Sigmoid colon (tissue), 7 donors: ENCODE measurements at regions of chr2 and their contacts with region 1.

Region 1: DNA sequence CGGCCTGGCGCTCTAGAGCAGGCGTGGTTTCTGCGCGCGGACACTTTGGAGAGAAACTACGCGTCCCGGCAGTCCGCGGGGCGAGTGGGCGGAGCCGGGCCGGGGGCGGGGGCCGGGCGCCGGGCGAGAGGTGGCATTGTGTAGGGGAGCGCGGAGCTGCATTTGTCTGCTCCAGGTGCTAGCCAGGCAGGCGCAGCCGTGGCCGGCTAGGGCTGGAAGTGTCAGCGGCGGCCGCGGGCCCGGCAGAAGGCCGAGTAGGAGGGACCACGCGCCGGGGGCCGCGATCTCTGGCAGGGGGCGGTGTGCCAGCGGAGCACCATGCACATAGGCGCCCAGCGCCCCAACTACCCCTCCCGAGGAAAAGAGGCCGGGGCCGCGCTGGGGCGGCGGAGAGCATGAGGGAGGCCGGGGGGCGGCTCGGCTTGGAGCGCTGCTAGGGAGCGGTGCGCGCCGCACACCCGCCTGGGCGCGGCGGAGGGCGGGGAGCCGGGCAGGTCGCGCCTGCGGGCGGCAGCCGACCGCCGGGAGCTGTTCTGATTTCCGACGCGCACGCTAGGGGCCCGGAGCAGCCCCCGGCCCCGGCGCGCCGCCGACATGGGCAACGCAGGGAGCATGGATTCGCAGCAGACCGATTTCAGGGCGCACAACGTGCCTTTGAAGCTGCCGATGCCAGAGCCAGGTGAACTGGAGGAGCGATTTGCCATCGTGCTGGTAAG is at the start of gene FMNL2:
- DNase-seq: peak; percentile 91
- H3K4me3 ChIP-seq: peak within 1 kb of the TSS; percentile 74 to 98 (median 90)
- H3K27ac ChIP-seq: peak within 1 kb of the TSS; percentile 83 to 88 (median 86)
- H3K4me1 ChIP-seq: peaks cover 0 to 38% (median 24%) of the 10 kb centered on the region in 4 donors
- H3K27me3 ChIP-seq: no peaks in the 10 kb centered on the region
- CTCF ChIP-seq: no peak
- EP300 ChIP-seq: no peak
- POLR2A ChIP-seq: peak in 1 of 2 donors; percentile 32
- total RNA-seq, gene FMNL2: 17.8 to 30.5 (median 24.7) TPM

Region 2: GRCh38 chr2:152189622-152190495 is 145.3 kb before region 1 on chr2:
- intact Hi-C with region 1: loop called (anchors 5 kb)
- DNase-seq: no peak
- H3K4me3 ChIP-seq: no peak overlapping the region
- H3K27ac ChIP-seq: no peak overlapping the region
- H3K4me1 ChIP-seq: no peaks in the 10 kb centered on the region
- H3K27me3 ChIP-seq: no peaks in the 10 kb centered on the region
- CTCF ChIP-seq: peak; percentile 61 to 85 (median 80)
- EP300 ChIP-seq: no peak
- POLR2A ChIP-seq: no peak

Region 3: GRCh38 chr2:152453129-152453911 is 118.2 kb after region 1 on chr2:
- intact Hi-C with region 1: no loop called
- DNase-seq: no peak
- H3K4me3 ChIP-seq: no peak overlapping the region
- H3K27ac ChIP-seq: no peak overlapping the region
- H3K4me1 ChIP-seq: peaks cover 0 to 6% (median 0%) of the 10 kb centered on the region in 4 donors
- H3K27me3 ChIP-seq: no peaks in the 10 kb centered on the region
- CTCF ChIP-seq: no peak
- EP300 ChIP-seq: no peak
- POLR2A ChIP-seq: no peak

Region 4: DNA sequence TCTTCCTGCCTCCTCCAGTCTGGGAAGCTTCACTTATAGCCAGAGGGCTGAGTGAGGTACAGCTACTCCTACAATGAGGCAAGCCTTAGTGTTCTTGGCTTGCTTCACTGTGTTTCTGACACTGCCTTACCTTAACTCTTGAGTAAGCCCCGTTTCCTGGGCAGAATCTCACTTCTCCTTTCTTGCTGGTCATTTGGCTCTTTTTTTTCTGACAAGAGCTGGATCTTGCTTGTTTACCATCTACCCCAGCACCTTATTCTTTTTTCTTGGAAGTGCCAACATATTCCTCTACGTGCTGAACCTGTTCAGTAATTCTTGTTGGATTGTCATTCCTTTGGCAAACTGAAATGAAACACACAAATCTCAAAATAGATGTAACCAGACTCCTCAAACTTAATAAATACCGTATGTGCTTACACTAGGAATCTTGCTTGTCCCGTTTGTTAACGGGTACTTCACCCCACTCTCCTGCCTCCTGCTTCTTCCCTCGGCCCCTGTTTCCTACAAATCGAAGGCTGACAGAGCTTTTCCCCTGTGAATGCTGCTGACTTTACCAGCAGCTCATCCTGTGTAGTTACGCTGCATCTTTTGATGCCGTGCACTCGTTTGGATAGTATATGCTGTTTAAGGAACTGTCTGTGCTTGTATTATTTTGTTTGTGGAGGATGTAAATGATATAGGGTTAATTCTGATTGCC is 132.0 kb after region 1 on chr2:
- intact Hi-C with region 1: loop called (anchors 10 kb)
- DNase-seq: peak; percentile 70
- H3K4me3 ChIP-seq: no peak overlapping the region
- H3K27ac ChIP-seq: peak overlapping the region; percentile 1 to 57 (median 49)
- H3K4me1 ChIP-seq: peaks cover 0 to 52% (median 47%) of the 10 kb centered on the region in 4 donors
- H3K27me3 ChIP-seq: no peaks in the 10 kb centered on the region
- CTCF ChIP-seq: no peak
- EP300 ChIP-seq: no peak
- POLR2A ChIP-seq: no peak

Region 5: DNA sequence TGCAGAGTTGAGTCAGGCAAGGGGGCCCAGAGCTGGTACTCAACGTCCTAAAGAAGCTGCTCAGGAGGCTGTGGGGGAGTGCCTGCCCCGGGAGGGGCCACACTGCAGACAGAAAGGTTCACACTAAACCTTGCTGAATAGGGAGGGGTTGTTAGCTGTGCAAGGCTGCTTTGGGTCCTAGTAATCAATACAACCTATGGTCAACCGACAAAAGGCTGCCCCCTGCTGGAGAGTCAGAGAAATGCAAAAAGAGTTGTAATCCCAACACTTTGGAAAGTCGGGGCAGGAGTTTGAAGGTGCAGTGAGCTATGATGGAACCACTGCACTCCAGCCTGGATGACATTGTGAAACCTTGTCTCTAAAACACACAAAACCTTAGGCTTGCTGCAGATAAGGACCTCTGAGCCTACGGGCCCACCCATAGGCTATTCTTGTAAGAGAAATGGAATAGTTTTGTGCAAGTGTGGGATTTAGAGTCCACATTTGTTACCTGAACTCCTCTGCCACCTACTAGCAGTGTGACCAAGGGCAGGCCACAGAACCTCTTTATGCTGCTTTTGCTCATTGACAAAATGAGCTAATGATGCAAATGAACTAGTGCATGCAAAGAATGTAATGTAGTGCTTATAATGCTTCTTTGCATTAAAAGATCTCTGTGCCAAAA is 300.6 kb after region 1 on chr2:
- intact Hi-C with region 1: loop called (anchors 5 kb)
- DNase-seq: peak; percentile 67
- H3K4me3 ChIP-seq: no peak overlapping the region
- H3K27ac ChIP-seq: no peak overlapping the region
- H3K4me1 ChIP-seq: no peaks in the 10 kb centered on the region
- H3K27me3 ChIP-seq: no peaks in the 10 kb centered on the region
- CTCF ChIP-seq: peak; percentile 54 to 88 (median 72)
- EP300 ChIP-seq: no peak
- POLR2A ChIP-seq: no peak